Mammary epithelial cell (primary cell): ENCODE measurements at regions of chr11 and their contacts with region 1.

Region 1: DNA sequence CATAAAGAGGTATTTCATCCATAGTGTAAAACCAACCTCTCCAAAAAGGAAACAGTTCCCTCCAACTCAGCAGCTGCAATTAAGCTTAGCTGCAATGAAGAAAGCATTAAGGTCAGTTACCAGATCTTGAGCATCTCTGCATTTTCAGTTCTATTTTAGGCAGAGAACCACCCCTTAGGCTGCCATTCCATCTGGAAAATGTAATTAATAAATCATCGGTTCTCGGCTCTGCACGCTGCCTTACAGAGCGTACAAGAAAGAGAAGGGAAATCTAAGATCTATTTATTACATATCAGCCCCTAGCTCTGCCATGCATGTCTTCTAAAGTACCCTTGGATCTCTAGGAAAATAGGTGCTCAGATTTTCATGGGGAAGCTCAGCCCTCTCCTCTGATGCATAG is 71.5 kb downstream of the RCN1 start:
- DNase-seq: no peak
- H3K4me3 ChIP-seq: no peak overlapping the region
- H3K27ac ChIP-seq: no peak overlapping the region
- H3K4me1 ChIP-seq: no peaks in the 10 kb centered on the region
- H3K27me3 ChIP-seq: peaks cover 3% of the 10 kb centered on the region
- CTCF ChIP-seq: no peak

Region 2: GRCh38 chr11:32224580-32224979 is 62.2 kb after region 1 on chr11:
- CTCF ChIA-PET with region 1: no interaction called
- dilution Hi-C with region 1: loop called (anchors 5 kb)
- in situ Hi-C with region 1: no loop called
- intact Hi-C with region 1: no loop called
- DNase-seq: no peak
- H3K4me3 ChIP-seq: no peak overlapping the region
- H3K27ac ChIP-seq: no peak overlapping the region
- H3K4me1 ChIP-seq: no peaks in the 10 kb centered on the region
- H3K27me3 ChIP-seq: no peaks in the 10 kb centered on the region
- CTCF ChIP-seq: no peak

Region 3: GRCh38 chr11:32326522-32326921 is 164.2 kb after region 1 on chr11:
- CTCF ChIA-PET with region 1: no interaction called
- dilution Hi-C with region 1: no loop called
- in situ Hi-C with region 1: no loop called
- intact Hi-C with region 1: no loop called
- DNase-seq: no peak
- H3K4me3 ChIP-seq: no peak overlapping the region
- H3K27ac ChIP-seq: no peak overlapping the region
- H3K4me1 ChIP-seq: no peaks in the 10 kb centered on the region
- H3K27me3 ChIP-seq: no peaks in the 10 kb centered on the region
- CTCF ChIP-seq: no peak